ENCODE measurements at regions of chr19 and their contacts with region 1.

Region 1: GRCh38 chr19:45798995-45799517 is 6.4 kb upstream of the DMWD start:
- DNase-seq: no peak
- H3K4me3 ChIP-seq: no peak overlapping the region
- H3K27me3 ChIP-seq: no peaks in the 10 kb centered on the region
- CTCF ChIP-seq: peak; percentile 81

Region 2: DNA sequence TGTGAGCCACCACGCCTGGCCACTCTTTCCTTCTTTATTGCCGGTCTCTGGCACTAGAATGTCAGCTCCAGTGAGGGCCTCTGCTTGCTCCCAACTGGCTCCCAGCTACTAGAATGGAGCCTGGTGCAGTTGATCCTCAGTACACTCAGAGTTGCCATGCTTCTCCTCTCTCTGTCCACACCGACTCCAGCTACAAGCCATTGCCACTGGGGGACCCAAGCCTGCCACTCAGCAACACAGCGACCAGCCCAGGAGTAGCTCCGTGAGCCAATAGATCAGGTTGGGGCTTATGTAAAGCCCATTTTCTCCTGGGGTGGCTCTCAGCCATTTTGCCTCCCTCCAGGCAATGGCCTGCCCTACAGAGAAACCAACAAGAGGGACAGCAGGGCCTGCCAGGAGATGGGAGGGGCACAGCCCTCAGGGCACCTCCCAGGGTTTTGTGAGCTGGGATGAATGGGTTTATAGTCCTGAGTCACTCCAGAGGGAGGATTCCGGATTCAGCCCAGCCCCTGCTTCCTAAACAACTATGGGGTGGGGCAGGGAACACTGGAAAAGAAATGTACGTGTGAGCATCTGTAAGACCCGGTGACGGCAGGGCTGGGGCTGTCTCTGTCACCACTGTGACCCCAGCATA is 251.0 kb before region 1 on chr19:
- CTCF ChIA-PET with region 1: no interaction called
- POLR2A ChIA-PET with region 1: interaction called, 22 read pairs
- DNase-seq: peak; percentile 66
- H3K4me3 ChIP-seq: no peak overlapping the region
- H3K27me3 ChIP-seq: no peaks in the 10 kb centered on the region
- CTCF ChIP-seq: no peak

Region 3: DNA sequence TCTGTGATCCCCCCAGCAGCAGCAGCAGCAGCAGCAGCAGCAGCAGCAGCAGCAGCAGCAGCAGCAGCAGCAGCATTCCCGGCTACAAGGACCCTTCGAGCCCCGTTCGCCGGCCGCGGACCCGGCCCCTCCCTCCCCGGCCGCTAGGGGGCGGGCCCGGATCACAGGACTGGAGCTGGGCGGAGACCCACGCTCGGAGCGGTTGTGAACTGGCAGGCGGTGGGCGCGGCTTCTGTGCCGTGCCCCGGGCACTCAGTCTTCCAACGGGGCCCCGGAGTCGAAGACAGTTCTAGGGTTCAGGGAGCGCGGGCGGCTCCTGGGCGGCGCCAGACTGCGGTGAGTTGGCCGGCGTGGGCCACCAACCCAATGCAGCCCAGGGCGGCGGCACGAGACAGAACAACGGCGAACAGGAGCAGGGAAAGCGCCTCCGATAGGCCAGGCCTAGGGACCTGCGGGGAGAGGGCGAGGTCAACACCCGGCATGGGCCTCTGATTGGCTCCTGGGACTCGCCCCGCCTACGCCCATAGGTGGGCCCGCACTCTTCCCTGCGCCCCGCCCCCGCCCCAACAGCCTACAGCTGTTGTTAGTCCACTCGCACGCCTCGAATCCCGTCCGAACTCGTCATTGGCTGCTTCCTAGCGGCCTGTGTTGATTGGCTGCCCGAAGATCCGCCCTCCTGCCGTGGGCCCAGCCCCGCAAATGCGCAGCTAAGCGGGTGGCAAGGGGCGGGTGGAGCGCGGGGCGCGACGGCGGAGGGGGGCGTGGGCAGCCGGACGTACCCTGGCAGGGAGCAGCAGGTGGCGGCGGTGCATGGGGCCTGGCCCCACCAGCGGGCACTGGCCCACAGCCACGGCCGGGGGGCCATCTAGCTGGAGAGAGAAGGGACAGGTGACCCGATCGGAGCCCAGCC is 28.6 kb before region 1 on chr19:
- CTCF ChIA-PET with region 1: interaction called, 154 read pairs
- POLR2A ChIA-PET with region 1: interaction called, 7 read pairs
- DNase-seq: peak; percentile 83
- H3K4me3 ChIP-seq: peak overlapping the region; percentile 42
- H3K27me3 ChIP-seq: no peaks in the 10 kb centered on the region
- CTCF ChIP-seq: peak; percentile 91

Region 4: GRCh38 chr19:45809643-45810159 is 10.6 kb after region 1 on chr19:
- CTCF ChIA-PET with region 1: interaction called, 111 read pairs
- POLR2A ChIA-PET with region 1: interaction called, 4 read pairs
- DNase-seq: peak; percentile 23
- H3K4me3 ChIP-seq: no peak overlapping the region
- H3K27me3 ChIP-seq: no peaks in the 10 kb centered on the region
- CTCF ChIP-seq: no peak

Measured in BJ (cell line).